ENCODE measurements at regions of chr11 and their contacts with region 1.

Region 1: DNA sequence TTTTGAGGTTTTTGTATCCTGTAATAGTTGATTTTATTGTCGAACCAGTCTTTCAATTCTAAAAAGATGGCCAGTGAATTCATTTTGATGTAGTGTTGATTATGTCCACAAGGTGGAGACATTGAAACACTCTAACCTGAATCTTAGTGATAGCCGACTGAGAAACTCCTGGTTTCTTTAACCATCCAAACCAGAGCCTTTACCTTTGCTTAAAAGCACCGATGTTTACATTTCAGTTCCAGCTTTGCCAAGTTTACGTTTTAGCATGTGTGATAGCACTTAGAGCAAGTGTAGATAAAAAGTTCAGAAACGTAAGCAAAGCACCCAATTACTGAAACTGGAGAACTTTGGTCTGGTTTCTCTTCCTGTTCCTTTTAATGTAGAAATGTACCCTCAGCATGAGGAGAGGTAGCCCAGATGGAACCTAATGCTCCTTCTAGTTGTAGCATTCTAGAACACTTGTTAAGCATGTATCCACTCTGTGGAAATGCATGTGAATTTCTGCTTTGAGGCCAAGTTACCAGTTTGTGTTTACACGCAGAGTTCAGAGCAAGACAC is 208.6 kb downstream of the DBX1 start:
- DNase-seq: peak in 1 of 2 experiments; percentile 72
- H3K4me3 ChIP-seq: no peak overlapping the region
- H3K4me3 Mint-ChIP-seq: peak overlapping the region; percentile 59
- H3K27ac Mint-ChIP-seq: peak overlapping the region; percentile 71
- H3K4me1 ChIP-seq: peaks cover 36% of the 10 kb centered on the region
- H3K4me1 Mint-ChIP-seq: peaks cover 36% of the 10 kb centered on the region
- H3K27me3 ChIP-seq: no peaks in the 10 kb centered on the region
- H3K27me3 Mint-ChIP-seq: no peaks in the 10 kb centered on the region
- CTCF ChIP-seq: peak; percentile 55 to 61

Region 2: DNA sequence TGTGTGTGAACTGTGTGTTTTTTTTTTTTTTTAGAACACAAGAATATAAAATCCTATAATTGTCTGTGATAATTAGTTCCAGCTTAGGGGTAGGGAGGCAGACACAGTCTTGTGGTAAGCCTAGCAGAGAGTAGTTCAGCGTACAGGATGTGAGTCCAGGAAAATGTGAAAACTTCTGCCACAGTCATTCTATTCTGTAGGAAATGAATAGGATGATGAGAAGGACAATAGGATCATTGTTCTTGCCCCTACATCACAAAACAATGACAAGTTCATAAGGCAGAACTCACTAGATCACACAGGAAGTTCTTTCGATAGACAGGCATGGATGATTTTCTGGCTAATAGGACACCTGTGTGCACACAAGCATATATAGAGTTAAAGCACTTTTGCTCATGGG is 106.8 kb before region 1 on chr11:
- CTCF ChIA-PET with region 1: no interaction called
- POLR2A ChIA-PET with region 1: no interaction called
- intact Hi-C with region 1: no loop called
- DNase-seq: no peak
- H3K4me3 ChIP-seq: no peak overlapping the region
- H3K4me3 Mint-ChIP-seq: no peak overlapping the region
- H3K27ac Mint-ChIP-seq: no peak overlapping the region
- H3K4me1 ChIP-seq: no peaks in the 10 kb centered on the region
- H3K4me1 Mint-ChIP-seq: no peaks in the 10 kb centered on the region
- H3K27me3 ChIP-seq: no peaks in the 10 kb centered on the region
- H3K27me3 Mint-ChIP-seq: no peaks in the 10 kb centered on the region
- CTCF ChIP-seq: no peak

Region 3: DNA sequence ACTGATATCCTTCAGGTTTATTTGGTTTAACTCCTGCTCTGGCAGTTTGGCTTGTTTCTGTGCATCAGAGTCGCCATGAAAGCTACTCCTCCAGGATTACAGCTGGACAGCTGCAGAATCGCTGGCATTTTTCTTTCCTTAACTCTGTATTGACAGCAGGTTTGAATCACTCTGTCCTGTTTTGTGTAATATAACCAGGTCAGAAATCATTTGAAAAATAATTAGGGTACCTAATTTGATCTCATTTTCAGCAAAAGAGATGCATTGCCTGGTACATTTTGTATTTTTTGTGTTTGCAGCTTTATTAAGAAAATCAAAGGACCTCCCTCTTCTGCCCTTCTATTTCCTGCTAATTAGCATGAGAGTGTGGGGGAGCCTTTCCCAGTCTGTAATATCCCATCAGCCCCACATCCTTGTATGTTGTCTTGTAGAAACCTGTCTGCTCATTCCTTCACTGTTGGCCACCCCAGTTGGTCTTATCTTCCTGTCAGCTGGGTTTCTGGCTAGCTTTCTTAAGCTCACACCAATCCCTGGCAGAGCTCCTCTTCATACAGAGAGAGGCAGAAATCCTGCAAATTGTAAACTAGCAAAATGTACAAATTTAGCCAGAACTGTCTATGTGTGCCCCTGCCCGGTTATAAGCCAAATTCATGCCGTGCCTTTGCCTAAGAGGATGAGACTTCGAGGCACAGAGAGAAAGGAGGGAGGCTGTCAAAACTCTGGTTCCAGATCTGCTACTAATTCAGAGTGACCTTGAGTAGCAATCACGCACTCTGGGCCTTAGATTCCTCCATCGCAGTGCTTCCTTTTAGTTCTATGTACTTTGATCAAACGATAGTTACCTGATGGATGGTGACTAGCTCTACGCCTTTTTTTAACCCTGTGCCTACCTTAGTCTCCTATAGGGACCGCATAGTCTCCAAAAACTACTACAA is 38.4 kb before region 1 on chr11:
- CTCF ChIA-PET with region 1: interaction called, 7 read pairs
- POLR2A ChIA-PET with region 1: no interaction called
- intact Hi-C with region 1: loop called (anchors 1 kb)
- DNase-seq: no peak
- H3K4me3 ChIP-seq: no peak overlapping the region
- H3K4me3 Mint-ChIP-seq: peak overlapping the region; percentile 30
- H3K27ac Mint-ChIP-seq: peak overlapping the region; percentile 31
- H3K4me1 ChIP-seq: peaks cover 31% of the 10 kb centered on the region
- H3K4me1 Mint-ChIP-seq: peaks cover 54% of the 10 kb centered on the region
- H3K27me3 ChIP-seq: no peaks in the 10 kb centered on the region
- H3K27me3 Mint-ChIP-seq: no peaks in the 10 kb centered on the region
- CTCF ChIP-seq: no peak

Region 4: DNA sequence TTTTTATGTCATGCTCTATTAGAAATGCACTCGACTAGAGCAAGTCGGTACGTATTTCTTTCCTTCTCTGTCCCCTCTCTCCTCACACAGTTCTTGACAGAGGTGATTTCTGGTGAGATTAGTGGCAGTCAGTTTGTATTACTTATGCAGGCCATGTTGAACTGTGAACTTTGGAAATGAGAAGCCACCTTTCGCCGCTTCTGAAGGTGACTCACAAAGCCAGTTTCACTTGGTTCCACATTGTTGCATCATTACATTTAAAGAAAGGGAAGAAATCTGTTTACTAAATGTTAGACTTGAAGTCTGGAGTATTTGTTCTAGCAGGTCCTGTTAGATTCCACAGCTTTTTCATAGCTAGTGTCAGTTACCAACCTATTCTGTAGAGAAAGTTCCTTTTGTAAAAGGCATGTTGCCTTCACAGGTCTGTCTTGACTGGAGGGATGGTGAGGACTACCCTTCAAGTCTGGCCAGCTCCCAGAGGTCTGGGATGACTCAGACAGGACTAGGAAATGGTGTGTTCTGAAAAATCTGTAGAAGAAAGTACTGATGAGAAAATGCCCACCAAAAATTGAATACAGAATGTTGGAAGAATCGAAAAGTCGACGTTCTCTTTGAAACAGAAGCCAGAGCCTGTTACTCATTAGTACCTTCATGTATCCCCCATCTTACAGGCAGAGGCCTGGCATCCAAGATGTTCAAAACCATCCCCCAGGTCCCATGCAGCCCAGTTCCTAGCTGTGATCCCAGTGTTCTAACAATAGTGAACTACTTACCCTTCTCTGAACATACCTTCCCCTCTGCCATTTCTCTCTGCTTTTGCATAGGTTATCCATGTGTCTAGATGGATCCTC is 27.3 kb after region 1 on chr11:
- CTCF ChIA-PET with region 1: interaction called, 3 read pairs
- POLR2A ChIA-PET with region 1: interaction called, 3 read pairs
- intact Hi-C with region 1: loop called (anchors 1 kb)
- DNase-seq: peak; percentile 63 to 74
- H3K4me3 ChIP-seq: no peak overlapping the region
- H3K4me3 Mint-ChIP-seq: peak overlapping the region; percentile 48
- H3K27ac Mint-ChIP-seq: peak overlapping the region; percentile 96
- H3K4me1 ChIP-seq: peaks cover 53% of the 10 kb centered on the region
- H3K4me1 Mint-ChIP-seq: peaks cover 52% of the 10 kb centered on the region
- H3K27me3 ChIP-seq: no peaks in the 10 kb centered on the region
- H3K27me3 Mint-ChIP-seq: no peaks in the 10 kb centered on the region
- CTCF ChIP-seq: no peak

Region 5: DNA sequence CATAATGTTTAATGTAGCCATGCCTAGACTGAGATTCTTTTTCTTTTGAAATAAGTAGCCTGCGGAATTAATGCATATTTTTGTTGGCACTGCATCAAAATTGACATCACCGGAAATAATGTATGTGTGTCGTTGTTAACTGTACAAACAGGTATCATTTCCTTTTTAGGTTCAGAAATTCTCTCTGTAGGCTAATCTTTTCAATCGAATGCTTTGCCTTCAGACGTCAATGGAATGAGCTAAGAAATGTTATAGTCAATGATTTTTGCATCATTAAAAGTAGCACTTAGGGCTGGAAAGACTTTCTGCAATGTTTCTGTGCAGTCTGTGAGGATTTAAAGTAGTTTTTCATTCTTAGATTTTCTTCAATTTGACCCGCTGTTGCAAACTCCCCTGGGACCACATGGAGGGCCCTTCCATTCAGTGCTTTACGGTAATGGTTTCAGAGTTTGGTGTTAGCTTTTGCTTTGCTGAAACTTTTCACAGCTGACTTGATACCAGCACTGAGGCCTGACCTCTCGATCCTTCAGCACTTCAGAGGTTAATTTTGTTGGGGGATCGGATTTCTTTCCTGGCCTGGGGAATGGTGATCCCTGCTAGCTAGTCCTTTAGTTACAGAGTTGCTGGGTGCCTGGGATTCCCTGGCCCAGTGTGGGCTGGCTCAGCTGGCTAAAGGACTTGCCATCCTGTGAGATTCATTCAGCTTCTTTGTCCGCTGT is 70.9 kb after region 1 on chr11:
- CTCF ChIA-PET with region 1: interaction called, 5 read pairs
- POLR2A ChIA-PET with region 1: no interaction called
- intact Hi-C with region 1: loop called (anchors 1 kb)
- DNase-seq: peak; percentile 57 to 62
- H3K4me3 ChIP-seq: peak overlapping the region; percentile 41
- H3K4me3 Mint-ChIP-seq: no peak overlapping the region
- H3K27ac Mint-ChIP-seq: peak overlapping the region; percentile 74
- H3K4me1 ChIP-seq: peaks cover 85% of the 10 kb centered on the region
- H3K4me1 Mint-ChIP-seq: peaks cover 16% of the 10 kb centered on the region
- H3K27me3 ChIP-seq: no peaks in the 10 kb centered on the region
- H3K27me3 Mint-ChIP-seq: no peaks in the 10 kb centered on the region
- CTCF ChIP-seq: no peak

Region 6: DNA sequence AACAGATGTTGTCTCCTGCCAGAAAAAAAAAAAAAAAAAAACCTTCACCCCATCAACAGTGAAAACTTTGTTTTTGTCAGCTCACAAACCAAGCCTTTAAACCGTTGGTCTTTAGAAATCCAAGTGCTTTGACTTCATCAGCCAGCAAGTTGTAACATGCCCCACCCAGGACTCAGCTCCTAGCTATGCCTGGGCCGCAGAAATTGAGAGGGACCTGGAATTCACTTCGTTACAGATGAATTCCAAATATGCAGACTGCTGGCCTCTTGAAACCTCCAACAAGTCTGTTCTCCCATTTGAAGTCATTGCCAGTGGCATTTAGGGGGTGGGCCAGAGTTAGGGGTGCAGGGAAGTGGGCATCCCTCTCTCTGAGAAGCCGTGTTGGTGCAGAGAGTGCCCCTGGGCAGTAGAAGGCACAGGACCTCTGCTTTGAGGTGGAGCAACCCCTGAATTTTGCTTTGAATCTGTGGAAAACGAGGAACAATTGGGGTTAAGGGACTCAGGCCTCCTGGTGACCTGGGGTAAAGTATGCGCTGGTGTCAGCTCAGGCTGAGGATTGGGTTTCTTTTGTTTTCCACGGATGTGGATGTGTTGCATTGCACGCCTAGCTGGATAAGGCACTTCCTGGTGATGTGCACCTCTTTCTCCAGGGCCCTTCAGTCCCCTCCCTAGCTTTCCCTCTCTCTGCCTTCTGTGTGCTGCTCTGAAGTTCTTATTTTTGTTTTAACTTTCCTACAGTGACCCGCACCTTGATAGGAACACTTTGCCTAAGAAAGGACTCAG is 99.1 kb after region 1 on chr11:
- CTCF ChIA-PET with region 1: no interaction called
- POLR2A ChIA-PET with region 1: no interaction called
- intact Hi-C with region 1: no loop called
- DNase-seq: peak in 1 of 2 experiments; percentile 48
- H3K4me3 ChIP-seq: no peak overlapping the region
- H3K4me3 Mint-ChIP-seq: no peak overlapping the region
- H3K27ac Mint-ChIP-seq: peak overlapping the region; percentile 9
- H3K4me1 ChIP-seq: peaks cover 8% of the 10 kb centered on the region; the same call in 1 of the 2 replicates
- H3K4me1 Mint-ChIP-seq: peaks cover 12% of the 10 kb centered on the region
- H3K27me3 ChIP-seq: no peaks in the 10 kb centered on the region
- H3K27me3 Mint-ChIP-seq: no peaks in the 10 kb centered on the region
- CTCF ChIP-seq: no peak

Region 7: GRCh38 chr11:20070459-20070858 is 118.8 kb after region 1 on chr11:
- CTCF ChIA-PET with region 1: no interaction called
- POLR2A ChIA-PET with region 1: no interaction called
- intact Hi-C with region 1: loop called (anchors 5 kb)
- DNase-seq: no peak
- H3K4me3 ChIP-seq: no peak overlapping the region
- H3K4me3 Mint-ChIP-seq: no peak overlapping the region
- H3K27ac Mint-ChIP-seq: no peak overlapping the region
- H3K4me1 ChIP-seq: 0 out of 2 replicates have a peak, but pooled peaks cover 11% of the 10 kb centered on the region
- H3K4me1 Mint-ChIP-seq: peaks cover 18% of the 10 kb centered on the region
- H3K27me3 ChIP-seq: no peaks in the 10 kb centered on the region
- H3K27me3 Mint-ChIP-seq: no peaks in the 10 kb centered on the region
- CTCF ChIP-seq: no peak

Region 8: DNA sequence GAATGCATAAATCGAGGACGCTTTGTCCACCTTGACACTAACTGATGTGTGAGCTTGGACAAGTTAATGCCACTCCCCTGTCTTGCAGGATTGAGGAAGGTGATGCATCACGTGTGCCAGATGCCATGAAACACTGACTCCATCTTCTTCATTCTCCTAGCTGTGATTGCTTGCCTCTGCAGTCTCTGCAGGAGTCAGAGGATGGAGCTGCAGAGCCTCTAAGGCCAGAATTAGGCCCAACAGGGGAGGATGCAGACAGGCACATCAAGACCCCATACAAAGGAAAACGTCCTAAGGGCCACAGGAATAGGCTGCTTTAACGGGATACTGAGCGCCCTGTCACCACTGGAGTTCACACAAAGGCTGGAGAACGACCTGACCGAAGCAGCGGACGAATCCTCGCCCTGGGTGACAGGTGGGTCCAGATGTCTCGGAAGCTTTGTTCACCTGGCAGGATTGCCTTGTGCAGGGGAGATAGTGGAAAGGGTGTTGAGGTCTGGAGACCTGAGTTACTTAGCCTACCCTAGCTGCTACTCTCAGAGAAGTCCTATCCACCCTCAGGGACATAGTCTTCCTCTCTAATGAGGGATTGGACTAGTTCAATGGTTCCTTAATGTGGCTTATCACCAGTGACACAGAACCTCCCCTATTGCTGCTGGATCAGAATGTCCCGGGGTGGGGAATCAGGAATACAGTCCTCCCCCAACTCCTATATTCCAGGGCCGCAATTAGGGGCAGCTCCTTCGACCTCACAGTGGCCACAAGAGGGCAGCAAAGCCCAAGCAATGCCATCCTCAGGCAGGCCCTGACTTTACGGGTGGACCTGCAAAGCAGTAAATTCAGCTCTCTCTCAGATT is 176.3 kb after region 1 on chr11:
- CTCF ChIA-PET with region 1: interaction called, 8 read pairs
- POLR2A ChIA-PET with region 1: no interaction called
- intact Hi-C with region 1: loop called (anchors 1 kb)
- DNase-seq: peak; percentile 82 to 87
- H3K4me3 ChIP-seq: no peak overlapping the region
- H3K4me3 Mint-ChIP-seq: no peak overlapping the region
- H3K27ac Mint-ChIP-seq: no peak overlapping the region
- H3K4me1 ChIP-seq: no peaks in the 10 kb centered on the region
- H3K4me1 Mint-ChIP-seq: peaks cover 8% of the 10 kb centered on the region
- H3K27me3 ChIP-seq: no peaks in the 10 kb centered on the region
- H3K27me3 Mint-ChIP-seq: peaks cover 2% of the 10 kb centered on the region
- CTCF ChIP-seq: peak; percentile 82 to 89

Region 9: DNA sequence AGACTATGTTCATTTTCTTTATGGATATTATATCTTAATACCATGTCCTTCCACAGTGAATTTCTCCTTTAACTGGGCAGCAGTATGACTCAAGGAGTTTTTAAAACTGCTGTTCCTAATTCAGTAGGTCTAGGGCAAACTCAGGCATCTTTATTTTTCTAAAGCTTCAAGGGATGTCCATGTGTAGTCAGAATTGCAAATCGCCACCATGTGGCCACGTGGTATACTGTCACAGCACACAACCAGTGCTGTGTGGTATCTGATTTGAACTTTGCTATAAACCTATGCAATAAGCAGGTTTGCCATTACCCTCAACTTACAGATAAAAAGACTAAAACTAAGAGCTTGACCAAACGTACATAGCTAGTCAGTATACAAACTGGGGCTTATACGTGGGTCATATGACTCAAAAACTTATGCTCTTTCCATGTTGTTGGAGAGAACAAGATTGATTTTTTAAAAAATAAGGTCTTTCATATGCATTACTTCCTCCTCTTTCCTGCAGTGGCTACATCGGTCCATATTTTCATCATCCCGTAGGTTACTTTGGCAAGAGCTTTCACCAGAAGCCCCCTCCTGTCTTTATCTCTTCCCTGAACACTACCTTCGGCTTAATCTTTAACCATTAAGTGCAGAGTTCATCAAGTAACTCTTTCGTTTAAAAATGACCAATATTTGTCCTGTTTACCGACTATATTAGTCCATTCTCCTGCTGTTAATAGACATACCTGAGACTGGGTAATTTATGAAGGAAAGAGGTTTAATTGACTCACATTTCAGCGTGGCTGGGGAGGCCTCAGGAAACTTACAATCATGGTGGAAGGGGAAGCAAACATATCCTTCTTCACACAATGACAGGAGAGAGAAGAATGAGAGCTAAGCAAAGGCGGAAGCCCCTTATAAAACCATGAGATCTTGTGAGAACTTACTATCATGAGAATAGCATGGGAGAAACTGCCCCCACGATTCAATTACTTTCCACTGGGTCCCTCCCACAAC is 403.9 kb after region 1 on chr11:
- CTCF ChIA-PET with region 1: no interaction called
- POLR2A ChIA-PET with region 1: no interaction called
- intact Hi-C with region 1: loop called (anchors 5 kb)
- DNase-seq: peak; percentile 70 to 75
- H3K4me3 ChIP-seq: 0 out of 2 replicates have a peak overlapping the region, but pooled peaks have one; percentile 2
- H3K4me3 Mint-ChIP-seq: peak overlapping the region; percentile 71
- H3K27ac Mint-ChIP-seq: peak overlapping the region; percentile 81
- H3K4me1 ChIP-seq: peaks cover 13% of the 10 kb centered on the region
- H3K4me1 Mint-ChIP-seq: peaks cover 30% of the 10 kb centered on the region
- H3K27me3 ChIP-seq: no peaks in the 10 kb centered on the region
- H3K27me3 Mint-ChIP-seq: no peaks in the 10 kb centered on the region
- CTCF ChIP-seq: peak; percentile 69 to 74